Endothelial cell of umbilical vein (primary cell): ENCODE measurements at regions of chr19 and their contacts with region 1.

Region 1: DNA sequence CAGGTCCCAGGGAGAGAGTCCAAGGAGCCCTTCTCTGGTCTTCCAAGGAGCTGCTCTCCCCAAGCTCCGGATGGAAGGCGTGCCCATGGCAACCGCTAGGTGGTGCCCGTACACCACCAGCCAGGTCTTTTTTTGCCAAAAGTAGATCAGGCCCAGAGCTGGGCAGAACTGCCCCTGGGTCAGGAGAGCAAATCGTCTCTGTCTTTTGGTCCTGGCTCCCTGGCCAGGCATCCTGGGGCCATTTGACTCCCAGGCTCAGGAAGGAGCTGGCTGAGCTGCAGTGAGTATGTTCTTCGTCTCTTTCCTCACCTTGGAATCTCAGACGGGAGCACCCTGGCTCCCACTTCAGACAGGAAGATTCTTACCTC is 24.6 kb upstream of the BCL3 start:
- DNase-seq: peak; percentile 81
- H3K4me3 ChIP-seq: no peak overlapping the region
- H3K27ac ChIP-seq: no peak overlapping the region
- H3K4me1 ChIP-seq: peaks cover 36% of the 10 kb centered on the region
- H3K27me3 ChIP-seq: no peaks in the 10 kb centered on the region
- CTCF ChIP-seq: peak; percentile 90 to 98
- POLR2A ChIP-seq: no peak

Region 2: GRCh38 chr19:44712864-44713515 is 10.9 kb before region 1 on chr19:
- CTCF ChIA-PET with region 1: interaction called, 21 read pairs
- POLR2A ChIA-PET with region 1: no interaction called
- dilution Hi-C with region 1: no loop called
- intact Hi-C with region 1: no loop called
- DNase-seq: no peak
- H3K4me3 ChIP-seq: no peak overlapping the region
- H3K27ac ChIP-seq: no peak overlapping the region
- H3K4me1 ChIP-seq: peaks cover 12% of the 10 kb centered on the region
- H3K27me3 ChIP-seq: no peaks in the 10 kb centered on the region
- CTCF ChIP-seq: no peak
- POLR2A ChIP-seq: no peak

Region 3: DNA sequence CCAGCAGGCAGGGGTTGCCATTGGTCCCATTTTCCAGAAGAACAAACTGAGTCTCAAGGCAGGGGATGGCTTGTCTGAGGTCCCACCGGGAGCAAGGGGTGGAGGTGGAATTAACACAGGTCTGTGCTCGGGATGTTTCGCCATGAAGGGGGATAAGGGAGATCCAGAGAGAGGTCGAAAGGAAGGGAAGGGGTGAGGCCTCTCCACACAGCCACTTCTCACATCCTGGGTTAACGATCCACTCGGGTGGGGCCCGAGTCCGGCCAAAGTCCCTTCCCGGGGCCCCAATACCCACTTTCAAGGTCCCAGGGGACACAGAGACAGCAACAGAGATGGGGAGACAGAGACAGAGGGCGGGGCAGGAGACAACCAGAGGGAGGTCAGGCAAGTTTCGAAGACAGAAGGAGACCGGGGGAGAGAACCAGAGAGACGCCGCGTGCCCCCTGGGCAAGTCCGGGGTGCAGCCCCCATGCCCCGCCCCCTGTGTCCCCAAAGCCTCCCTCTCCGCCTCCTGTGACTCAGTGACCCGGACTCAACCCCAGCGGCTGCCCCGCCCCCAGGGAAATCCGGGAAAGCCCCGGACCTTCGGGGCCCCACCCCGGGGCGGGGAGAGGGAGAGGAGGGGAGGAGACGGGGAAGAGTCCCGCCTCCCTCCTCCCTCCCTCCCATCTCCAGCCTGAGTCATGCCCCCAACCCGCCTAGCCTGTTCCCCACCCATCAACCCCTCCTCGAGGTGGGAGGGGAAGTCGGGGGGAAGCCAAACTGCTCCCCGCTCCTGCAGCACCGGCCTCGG is 23.2 kb after region 1 on chr19:
- CTCF ChIA-PET with region 1: interaction called, 71 read pairs
- POLR2A ChIA-PET with region 1: interaction called, 4 read pairs
- dilution Hi-C with region 1: no loop called
- intact Hi-C with region 1: loop called (anchors 2 kb)
- DNase-seq: peak; percentile 90
- H3K4me3 ChIP-seq: peak overlapping the region in 1 of 3 experiments; percentile 31
- H3K27ac ChIP-seq: peak overlapping the region; percentile 84
- H3K4me1 ChIP-seq: peaks cover 33% of the 10 kb centered on the region
- H3K27me3 ChIP-seq: no peaks in the 10 kb centered on the region
- CTCF ChIP-seq: no peak
- POLR2A ChIP-seq: peak; percentile 33

Region 4: GRCh38 chr19:44782729-44783128 is 58.8 kb after region 1 on chr19:
- CTCF ChIA-PET with region 1: interaction called, 688 read pairs
- POLR2A ChIA-PET with region 1: no interaction called
- dilution Hi-C with region 1: no loop called
- intact Hi-C with region 1: no loop called
- DNase-seq: no peak
- H3K4me3 ChIP-seq: no peak overlapping the region
- H3K27ac ChIP-seq: no peak overlapping the region
- H3K4me1 ChIP-seq: no peaks in the 10 kb centered on the region
- H3K27me3 ChIP-seq: no peaks in the 10 kb centered on the region
- CTCF ChIP-seq: no peak
- POLR2A ChIP-seq: no peak

Region 5: DNA sequence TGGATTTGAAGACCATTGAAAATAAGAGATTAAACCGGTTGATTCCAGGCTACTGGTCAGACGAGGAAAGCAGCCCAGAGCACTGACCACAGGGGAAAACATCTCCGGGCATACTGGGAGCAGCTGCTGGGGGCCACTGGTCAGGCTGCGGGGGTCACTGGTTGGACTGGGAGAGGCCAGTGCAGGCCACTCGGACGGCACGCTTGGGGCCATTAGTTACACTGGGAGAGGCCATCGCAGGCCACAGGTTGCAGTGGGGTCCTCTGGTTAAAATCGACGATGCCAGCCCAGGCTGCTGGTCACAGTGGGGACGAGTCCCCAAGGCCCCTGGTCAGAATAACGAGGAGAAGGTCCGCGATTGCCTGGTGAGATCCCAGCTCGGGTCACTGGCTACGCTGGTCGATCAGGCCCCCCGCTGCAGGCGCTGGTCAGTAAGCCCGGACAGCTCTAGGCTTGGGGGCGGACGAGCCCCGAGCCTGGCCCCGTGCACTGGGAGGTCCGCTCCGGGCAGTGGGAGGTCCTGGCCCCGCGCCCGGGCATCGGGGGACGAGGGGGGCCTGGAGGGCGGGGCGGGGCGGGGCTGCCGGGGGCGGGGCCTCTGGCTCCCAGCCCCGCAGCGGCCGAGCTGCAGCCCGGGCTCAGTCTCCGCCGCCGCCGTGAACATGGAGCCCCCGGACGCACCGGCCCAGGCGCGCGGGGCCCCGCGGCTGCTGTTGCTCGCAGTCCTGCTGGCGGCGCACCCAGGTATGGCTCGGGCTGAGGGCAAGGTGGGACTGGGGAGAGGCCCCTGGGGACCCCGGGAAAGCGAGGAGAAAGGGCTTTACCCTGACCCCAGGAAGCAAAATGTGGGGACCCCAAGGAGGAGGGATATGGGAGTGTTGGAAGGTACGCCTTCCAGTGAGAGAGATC is 84.8 kb after region 1 on chr19 and contains the start of gene BCAM:
- CTCF ChIA-PET with region 1: interaction called, 30 read pairs
- POLR2A ChIA-PET with region 1: interaction called, 3 read pairs
- dilution Hi-C with region 1: no loop called
- intact Hi-C with region 1: loop called (anchors 1 kb)
- DNase-seq: peak; percentile 49
- H3K4me3 ChIP-seq: peak within 1 kb of the TSS; percentile 60 to 66 (median 64)
- H3K27ac ChIP-seq: no peak within 1 kb of the TSS
- H3K4me1 ChIP-seq: peaks cover 16% of the 10 kb centered on the region
- H3K27me3 ChIP-seq: no peaks in the 10 kb centered on the region
- CTCF ChIP-seq: no peak
- POLR2A ChIP-seq: peak; percentile 68
- total RNA-seq, gene BCAM: 28.5 and 29.0 TPM in 2 replicates

Region 6: DNA sequence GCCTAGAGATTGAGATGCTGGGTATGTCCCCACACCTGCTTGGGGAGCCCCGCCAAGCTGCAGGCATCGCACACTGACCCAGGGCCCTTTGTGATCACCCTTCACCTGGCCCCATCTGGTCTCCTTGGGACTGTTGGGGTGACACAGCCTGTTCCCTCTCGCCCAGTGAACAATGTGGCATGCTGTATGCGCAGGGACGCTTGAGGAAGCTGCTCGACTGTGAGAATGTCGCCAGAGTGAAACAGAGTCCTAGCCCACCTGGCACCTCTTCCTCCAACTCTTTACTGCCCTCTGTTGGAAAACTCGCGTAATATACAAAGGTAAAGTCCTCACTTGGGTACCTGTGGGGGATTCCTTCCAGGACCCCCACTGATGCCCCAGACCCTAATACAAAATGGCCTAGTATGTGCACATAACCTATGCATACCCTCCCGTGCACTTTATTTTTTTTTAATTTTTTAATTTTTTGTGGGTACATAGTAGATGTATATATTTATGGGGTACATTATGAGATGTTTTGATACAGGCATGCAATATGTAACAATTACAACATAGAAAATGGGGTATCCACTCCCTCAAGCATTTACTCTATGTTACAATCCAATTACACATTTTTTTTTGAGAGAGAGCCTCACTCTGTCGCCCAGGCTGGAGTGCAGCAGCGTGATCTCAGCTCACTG is 463.6 kb after region 1 on chr19:
- CTCF ChIA-PET with region 1: no interaction called
- POLR2A ChIA-PET with region 1: no interaction called
- dilution Hi-C with region 1: no loop called
- intact Hi-C with region 1: no loop called
- DNase-seq: no peak
- H3K4me3 ChIP-seq: no peak overlapping the region
- H3K27ac ChIP-seq: no peak overlapping the region
- H3K4me1 ChIP-seq: no peaks in the 10 kb centered on the region
- H3K27me3 ChIP-seq: no peaks in the 10 kb centered on the region
- CTCF ChIP-seq: peak; percentile 53 to 61
- POLR2A ChIP-seq: no peak